Posterior cingulate gyrus (tissue), 11 donors: ENCODE measurements at regions of chr12 and their contacts with region 1.

Region 1: GRCh38 chr12:6752921-6753771 is at the start of gene MLF2:
- DNase-seq: peak; percentile 95 to 100 (median 97)

Region 2: GRCh38 chr12:6766651-6767349 is 13.7 kb after region 1 on chr12:
- intact Hi-C with region 1: loop called (anchors 2 kb)
- DNase-seq: peak; percentile 55 to 95 (median 69)

Region 3: GRCh38 chr12:6778574-6779550 is 25.7 kb after region 1 on chr12:
- intact Hi-C with region 1: loop called (anchors 1 kb)
- DNase-seq: peak; percentile 83 to 98 (median 93)

Region 4: DNA sequence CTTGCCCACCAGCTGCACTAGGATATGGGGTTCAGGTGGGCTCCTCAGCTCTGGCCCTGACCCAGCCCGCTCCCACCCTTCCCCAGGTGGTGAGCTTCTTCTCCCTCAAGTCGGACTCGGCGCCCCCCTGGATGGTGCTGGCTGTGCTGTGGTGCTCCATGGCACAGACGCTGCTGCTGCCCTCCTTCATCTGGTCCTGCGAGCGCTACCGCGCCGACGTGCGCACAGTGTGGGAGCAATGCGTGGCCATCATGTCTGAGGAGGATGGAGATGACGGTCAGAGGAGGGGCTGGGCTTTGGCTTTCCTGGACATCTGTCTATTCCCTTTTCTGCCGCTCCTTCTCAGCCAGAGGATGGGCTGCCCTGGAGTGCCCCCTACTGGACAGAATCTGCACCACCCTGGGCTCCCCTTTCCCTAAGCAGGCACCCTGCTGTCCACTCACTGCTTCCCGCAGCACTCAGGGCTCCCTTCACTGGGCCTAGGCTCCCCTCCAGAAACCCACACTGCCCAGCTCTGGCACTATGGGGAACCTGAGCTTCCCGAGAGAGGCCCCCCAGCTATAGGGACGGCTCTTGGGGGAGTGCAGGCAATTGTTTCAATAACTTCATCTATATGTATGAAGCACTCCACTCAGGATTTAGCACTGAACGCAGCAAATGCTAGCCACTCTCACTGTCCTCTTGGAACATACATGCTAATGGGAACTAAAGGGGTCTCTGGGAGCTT is 72.4 kb after region 1 on chr12:
- intact Hi-C with region 1: loop called (anchors 1 kb)
- DNase-seq: peak; percentile 83 to 98 (median 90)